Activated CD4-positive, alpha-beta T cell treated with anti-CD3 and anti-CD28 coated beads, Interleukin-2, amount 10 ng/mL, durations not matched to agents 7 days and 5 days (primary cell): ENCODE measurements at regions of chr1 and their contacts with region 1.

Region 1: GRCh38 chr1:161440312-161440894 is 64.9 kb upstream of the FCGR2A start:
- DNase-seq: peak; percentile 59
- H3K4me3 Mint-ChIP-seq: peak overlapping the region; percentile 80
- H3K27ac Mint-ChIP-seq: peak overlapping the region; percentile 86
- H3K4me1 Mint-ChIP-seq: peaks cover 12% of the 10 kb centered on the region
- H3K27me3 Mint-ChIP-seq: peaks cover 33% of the 10 kb centered on the region

Region 2: DNA sequence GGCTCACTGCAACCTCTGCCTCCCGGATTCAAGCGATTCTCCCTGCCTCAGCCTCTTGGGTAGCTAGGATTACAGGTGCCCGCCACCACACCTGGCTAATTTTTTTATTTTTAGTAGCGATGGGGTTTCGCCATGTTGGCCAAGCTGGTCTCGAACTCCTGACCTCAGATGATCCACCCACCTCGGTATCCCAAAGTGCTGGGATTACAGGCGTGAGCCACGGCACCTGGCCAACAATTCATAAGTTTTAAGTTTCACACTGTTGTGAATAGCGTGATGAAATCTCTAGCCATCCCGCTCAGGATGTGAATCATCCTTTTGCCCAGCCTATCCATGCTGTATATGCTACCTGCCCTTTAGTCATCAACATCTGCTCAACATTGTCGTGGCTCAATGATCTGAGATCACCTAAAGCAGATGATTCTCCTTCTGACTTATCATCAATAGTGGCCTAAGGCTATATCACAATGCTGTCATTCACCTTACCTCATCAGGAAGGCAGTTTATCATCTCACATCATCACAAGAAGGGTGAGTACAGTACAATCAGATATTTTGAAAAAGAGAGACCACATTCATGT is 325.2 kb before region 1 on chr1:
- CTCF ChIA-PET with region 1: no interaction called
- POLR2A ChIA-PET with region 1: no interaction called
- DNase-seq: no peak
- H3K4me3 Mint-ChIP-seq: peak overlapping the region; percentile 13
- H3K27ac Mint-ChIP-seq: peak overlapping the region; percentile 20
- H3K4me1 Mint-ChIP-seq: peaks cover 73% of the 10 kb centered on the region
- H3K27me3 Mint-ChIP-seq: no peaks in the 10 kb centered on the region

Region 3: DNA sequence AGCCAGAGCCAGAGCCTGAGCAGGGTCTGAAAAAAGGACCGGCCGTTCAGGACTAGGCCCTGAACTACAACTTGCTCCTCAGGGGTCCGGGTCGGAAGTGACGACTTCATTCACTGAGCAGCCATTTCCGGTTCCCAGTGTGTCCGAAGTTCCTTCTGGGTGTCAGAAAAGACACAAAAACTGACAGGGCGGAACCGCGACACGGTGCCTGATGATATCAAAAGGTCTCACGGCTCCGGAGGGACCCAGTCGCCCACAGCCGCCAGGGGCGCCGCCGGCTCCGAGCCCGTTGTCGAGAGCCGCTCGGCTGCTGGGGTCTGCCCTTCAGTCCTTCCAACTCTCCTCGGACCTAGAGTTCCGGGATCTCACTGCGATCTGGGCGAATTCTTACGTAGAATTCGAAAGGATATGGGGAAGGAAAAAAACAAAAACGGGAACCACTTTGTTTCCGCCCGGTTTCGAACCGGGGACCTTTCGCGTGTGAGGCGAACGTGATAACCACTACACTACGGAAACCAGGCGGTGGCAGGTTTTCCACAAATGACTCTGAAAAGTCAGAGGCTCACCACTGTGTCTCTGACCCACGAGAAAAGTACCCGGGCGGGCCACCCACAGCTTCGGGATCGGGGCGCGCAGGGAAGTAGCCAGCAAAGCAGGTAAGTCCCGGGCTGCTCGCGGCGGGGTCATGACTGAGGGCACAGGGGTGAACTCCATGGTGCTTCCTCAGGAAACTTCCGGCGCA is 41.0 kb before region 1 on chr1:
- CTCF ChIA-PET with region 1: interaction called, 20 read pairs
- POLR2A ChIA-PET with region 1: no interaction called
- DNase-seq: peak; percentile 92
- H3K4me3 Mint-ChIP-seq: peak overlapping the region; percentile 97
- H3K27ac Mint-ChIP-seq: peak overlapping the region; percentile 99
- H3K4me1 Mint-ChIP-seq: peaks cover 40% of the 10 kb centered on the region
- H3K27me3 Mint-ChIP-seq: peaks cover 13% of the 10 kb centered on the region

Region 4: DNA sequence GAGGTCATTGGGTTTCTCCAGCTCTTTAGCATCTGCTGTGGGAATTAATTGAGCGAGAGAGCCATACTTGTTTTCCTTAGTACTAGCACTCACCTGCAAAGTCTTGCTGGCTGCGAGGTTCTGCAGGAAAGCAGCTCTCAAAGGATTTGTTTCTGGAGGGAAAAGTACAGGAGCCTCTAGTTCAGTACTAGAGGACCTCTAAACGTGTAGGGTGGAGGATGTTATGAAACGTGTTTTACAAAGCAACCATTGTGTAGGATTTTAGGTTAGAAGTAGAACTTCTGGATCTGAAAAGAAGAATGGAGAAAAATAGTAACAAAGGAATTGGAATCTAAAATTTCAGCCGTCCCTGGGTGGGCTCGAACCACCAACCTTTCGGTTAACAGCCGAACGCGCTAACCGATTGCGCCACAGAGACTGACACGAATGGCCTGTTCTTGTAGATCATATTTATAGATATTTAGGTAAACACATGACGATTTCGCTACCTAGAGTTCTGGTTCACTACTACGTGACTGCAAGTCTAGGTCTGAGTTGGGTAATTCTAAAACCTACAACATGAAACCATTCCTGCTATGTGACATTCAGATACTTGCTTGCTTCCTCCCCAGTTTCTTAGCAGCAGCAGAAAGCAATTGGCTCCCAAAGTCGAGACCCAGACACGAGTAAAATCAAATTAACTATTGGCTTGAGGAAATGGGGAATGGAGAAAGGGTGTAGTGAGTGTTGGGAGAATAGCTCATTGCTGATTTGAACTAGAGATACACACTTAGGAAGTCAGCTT is 12.5 kb before region 1 on chr1:
- CTCF ChIA-PET with region 1: interaction called, 45 read pairs
- POLR2A ChIA-PET with region 1: no interaction called
- DNase-seq: peak; percentile 18
- H3K4me3 Mint-ChIP-seq: peak overlapping the region; percentile 18
- H3K27ac Mint-ChIP-seq: no peak overlapping the region
- H3K4me1 Mint-ChIP-seq: peaks cover 16% of the 10 kb centered on the region
- H3K27me3 Mint-ChIP-seq: peaks cover 48% of the 10 kb centered on the region